Activated T-helper 1 cell treated with anti-CD3 and anti-CD28 coated beads, Interleukin-12 subunit alpha, Interleukin-12 subunit beta, Interleukin-2, Interleukin-4 antibody, amounts not matched to agents 30 ng/mL and 10 ng/mL and 1 ng/mL, durations not matched to agents 14 hours and 24 hours and 36 hours (primary cell): ENCODE measurements at regions of chr15 and their contacts with region 1.

Region 1: DNA sequence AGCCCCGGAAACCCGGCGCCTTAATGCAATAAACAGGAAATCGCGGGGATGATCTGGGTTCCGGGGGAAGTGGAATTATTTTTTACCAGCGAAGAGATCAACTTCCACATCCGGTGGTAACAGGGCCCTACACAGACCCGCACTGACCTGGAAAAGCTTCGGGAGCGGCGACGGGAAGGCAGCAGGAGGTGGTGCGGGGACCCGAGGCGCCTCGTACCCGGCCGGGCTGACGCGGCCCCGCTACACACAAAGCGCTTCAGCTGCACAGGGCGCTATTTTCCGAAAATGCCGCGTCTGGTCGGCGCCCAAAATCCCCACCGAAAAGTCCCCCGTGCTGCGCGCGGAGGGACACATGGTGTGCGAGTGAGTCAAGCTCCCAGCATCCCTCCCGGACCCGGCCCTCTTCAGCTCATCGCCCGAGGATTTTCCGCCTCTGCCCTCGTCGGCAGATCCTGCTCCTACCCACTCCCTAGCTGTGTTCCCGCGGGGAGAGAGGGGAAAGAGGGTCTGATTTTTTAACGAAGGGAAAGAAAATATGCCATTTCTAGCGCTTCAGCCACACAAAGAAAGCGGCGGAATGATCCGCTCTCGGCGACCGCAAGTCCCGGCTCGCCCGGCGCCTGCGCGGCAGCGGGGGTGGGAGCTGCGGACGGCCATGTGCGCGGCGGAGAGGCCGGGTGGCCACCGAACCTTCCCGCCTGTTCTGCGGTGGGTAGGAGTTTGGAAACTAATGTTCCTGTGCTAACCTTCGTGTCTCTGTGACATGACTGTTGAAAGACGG is at the start of gene GABPB1:
- DNase-seq: peak; percentile 87
- H3K4me3 Mint-ChIP-seq: peak within 1 kb of the TSS; percentile 100
- H3K27ac Mint-ChIP-seq: peak within 1 kb of the TSS; percentile 100
- H3K4me1 Mint-ChIP-seq: peaks cover 48% of the 10 kb centered on the region
- H3K27me3 Mint-ChIP-seq: no peaks in the 10 kb centered on the region
- total RNA-seq, gene GABPB1: 80.7 and 81.0 TPM in 2 replicates

Region 2: GRCh38 chr15:50182219-50183013 is 172.6 kb before region 1 on chr15:
- intact Hi-C with region 1: loop called (anchors 1 kb)
- DNase-seq: peak; percentile 53
- H3K4me3 Mint-ChIP-seq: peak overlapping the region; percentile 96
- H3K27ac Mint-ChIP-seq: peak overlapping the region; percentile 88
- H3K4me1 Mint-ChIP-seq: peaks cover 60% of the 10 kb centered on the region
- H3K27me3 Mint-ChIP-seq: no peaks in the 10 kb centered on the region

Region 3: DNA sequence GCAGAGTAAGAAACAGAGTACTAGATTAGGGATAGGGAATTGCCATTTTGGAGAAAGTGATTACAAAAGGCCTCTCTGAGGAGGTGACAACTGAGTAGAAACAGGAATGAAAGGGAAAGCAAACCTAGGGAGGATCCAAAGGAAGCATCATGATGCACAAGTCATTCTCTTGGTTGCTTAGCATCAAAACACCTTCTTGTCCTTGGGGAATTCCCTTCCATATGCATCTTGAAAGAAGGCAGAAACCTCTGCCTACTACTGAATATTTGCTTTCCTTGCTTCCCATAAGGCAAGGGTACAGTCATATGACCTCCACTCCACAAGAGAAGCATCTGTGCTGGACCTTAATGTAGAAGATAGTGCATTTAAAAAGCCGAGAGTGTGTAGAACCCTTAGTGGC is 24.1 kb before region 1 on chr15:
- intact Hi-C with region 1: loop called (anchors 1 kb)
- DNase-seq: no peak
- H3K4me3 Mint-ChIP-seq: no peak overlapping the region
- H3K27ac Mint-ChIP-seq: peak overlapping the region; percentile 69
- H3K4me1 Mint-ChIP-seq: peaks cover 34% of the 10 kb centered on the region
- H3K27me3 Mint-ChIP-seq: no peaks in the 10 kb centered on the region

Region 4: GRCh38 chr15:50377867-50378751 is 23.1 kb after region 1 on chr15:
- intact Hi-C with region 1: loop called (anchors 1 kb)
- DNase-seq: no peak
- H3K4me3 Mint-ChIP-seq: peak overlapping the region; percentile 44
- H3K27ac Mint-ChIP-seq: peak overlapping the region; percentile 92
- H3K4me1 Mint-ChIP-seq: peaks cover 18% of the 10 kb centered on the region
- H3K27me3 Mint-ChIP-seq: no peaks in the 10 kb centered on the region

Region 5: DNA sequence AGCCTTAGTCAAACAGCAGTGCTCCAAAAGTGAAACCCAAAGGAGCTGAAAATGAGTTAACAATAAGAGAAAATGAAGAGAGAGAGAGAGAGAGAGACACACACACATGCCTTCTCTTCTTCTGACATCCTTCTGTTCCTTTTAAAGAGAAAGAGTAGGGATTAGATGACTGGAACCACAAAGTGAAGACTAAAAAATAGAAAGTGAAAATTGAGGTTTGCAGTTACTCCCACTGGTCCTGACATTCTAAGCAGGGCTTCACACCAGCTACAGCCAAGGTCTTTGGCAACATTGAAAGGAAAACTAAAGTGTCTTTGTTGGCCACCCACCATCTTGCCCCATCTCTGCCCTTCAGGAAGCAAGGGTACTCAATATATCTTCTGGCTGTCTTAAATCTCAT is 132.3 kb after region 1 on chr15:
- intact Hi-C with region 1: loop called (anchors 1 kb)
- DNase-seq: no peak
- H3K4me3 Mint-ChIP-seq: no peak overlapping the region
- H3K27ac Mint-ChIP-seq: peak overlapping the region; percentile 4
- H3K4me1 Mint-ChIP-seq: peaks cover 14% of the 10 kb centered on the region
- H3K27me3 Mint-ChIP-seq: no peaks in the 10 kb centered on the region

Region 6: DNA sequence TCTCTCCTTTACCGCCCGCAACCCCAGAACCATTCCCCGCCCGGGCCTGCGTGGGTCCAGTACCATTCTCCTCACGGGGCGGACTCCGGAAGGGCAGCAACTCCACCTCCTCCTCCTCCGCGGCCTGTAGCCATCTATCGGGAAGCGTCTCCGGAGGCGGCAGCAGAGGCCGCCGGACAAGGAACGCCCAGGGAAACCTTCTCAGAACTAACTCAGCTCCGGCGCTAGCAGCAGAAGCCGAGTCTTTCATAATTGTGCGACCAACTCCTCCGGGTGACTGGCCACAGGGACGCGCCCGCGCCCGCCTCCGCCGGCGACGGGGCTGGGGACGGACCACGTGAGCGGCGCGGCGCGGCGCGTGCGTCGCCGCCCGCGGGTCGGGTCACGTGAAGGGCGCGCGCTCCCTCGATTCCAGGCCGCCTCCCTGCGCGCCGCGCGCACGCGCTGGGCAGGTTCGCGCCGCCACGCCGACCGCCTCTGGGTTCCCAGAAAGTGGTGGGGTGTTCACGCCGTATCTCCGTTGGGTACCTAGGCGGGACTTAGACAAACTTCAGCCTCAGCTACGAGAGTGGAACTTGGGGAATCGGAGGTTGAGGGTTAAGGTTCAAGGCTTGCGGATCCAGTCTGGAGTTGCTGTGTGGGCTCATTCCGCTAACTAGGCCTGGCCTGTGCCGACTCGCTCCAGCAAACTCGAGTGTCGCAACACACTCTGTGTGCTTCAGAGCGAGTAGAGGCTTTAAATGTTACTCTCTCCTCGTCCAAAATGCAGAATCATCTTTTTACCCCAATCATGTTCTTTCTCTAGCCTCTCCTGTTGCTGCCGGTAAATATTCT is 331.7 kb after region 1 on chr15 and contains the start of gene TRPM7:
- intact Hi-C with region 1: loop called (anchors 1 kb)
- DNase-seq: peak; percentile 86
- H3K4me3 Mint-ChIP-seq: peak within 1 kb of the TSS; percentile 97
- H3K27ac Mint-ChIP-seq: peak within 1 kb of the TSS; percentile 98
- H3K4me1 Mint-ChIP-seq: peaks cover 47% of the 10 kb centered on the region
- H3K27me3 Mint-ChIP-seq: no peaks in the 10 kb centered on the region
- total RNA-seq, gene TRPM7: 42.4 and 43.6 TPM in 2 replicates